A673 (cell line): ENCODE measurements at regions of chr5 and their contacts with region 1.

Region 1: GRCh38 chr5:146041180-146041789 is 64.1 kb downstream of the PLAC8L1 start:
- DNase-seq: peak; percentile 43
- H3K4me3 ChIP-seq: no peak overlapping the region
- H3K27ac ChIP-seq: no peak overlapping the region
- H3K4me1 ChIP-seq: peaks cover 13% of the 10 kb centered on the region
- H3K27me3 ChIP-seq: no peaks in the 10 kb centered on the region
- CTCF ChIP-seq: peak; percentile 59

Region 2: DNA sequence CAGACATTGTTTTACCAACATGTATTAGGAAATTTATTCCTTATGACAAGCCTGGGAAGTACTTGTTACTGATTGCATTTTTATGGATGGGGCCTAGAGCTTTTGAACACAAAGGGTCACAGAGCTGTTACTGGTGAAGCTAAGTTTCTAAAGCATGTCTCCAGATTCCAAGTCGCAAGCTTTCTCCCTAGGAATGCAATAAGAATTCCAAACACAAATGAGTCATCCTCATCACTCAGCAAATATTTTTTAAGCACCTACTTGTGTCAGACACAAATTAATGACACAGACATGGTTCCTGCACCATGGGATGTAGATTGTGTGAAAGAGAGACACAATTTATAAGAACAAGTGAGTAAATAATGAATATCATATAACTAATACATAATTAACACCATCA is 115.9 kb before region 1 on chr5:
- CTCF ChIA-PET with region 1: no interaction called
- POLR2A ChIA-PET with region 1: no interaction called
- intact Hi-C with region 1: loop called (anchors 5 kb)
- DNase-seq: peak; percentile 88
- H3K4me3 ChIP-seq: no peak overlapping the region
- H3K27ac ChIP-seq: peak overlapping the region; percentile 85
- H3K4me1 ChIP-seq: peaks cover 27% of the 10 kb centered on the region
- H3K27me3 ChIP-seq: no peaks in the 10 kb centered on the region
- CTCF ChIP-seq: no peak